IMR-90 (cell line): ENCODE measurements at regions of chr3 and their contacts with region 1.

Region 1: DNA sequence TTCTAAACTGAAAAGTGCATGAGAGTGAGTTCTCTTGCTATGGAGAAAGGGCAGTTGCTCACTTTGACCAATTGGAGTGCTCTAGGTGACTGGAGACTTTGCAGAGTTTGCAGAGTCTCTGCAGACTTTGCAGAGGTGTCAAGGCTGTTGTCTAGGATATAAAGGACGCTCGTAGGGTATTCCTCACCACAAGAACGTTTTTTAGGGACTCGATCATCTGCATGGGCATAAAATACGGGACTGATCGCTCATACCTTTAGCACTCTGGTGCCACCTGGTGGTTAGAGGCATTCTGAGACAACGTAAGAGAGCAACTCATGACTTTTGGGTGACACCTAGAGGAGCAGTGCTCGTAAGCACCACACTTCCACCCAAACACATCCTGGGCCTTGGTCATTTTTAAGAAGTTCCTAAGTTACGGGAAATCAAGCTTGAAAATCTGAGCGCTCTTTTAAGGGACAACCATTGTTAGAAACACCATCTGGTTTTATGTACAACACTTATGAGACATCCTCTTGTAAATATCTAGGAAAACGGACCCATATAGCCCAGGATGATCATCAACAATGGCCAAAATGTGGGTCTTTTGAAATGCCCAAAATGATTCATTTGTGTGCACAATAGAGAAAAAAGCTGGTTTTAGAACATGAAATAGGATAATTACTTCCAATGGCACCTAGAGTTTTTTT is 51.6 kb upstream of the XCR1 start:
- DNase-seq: peak; percentile 93
- ATAC-seq: peak; percentile 97
- H3K4me3 ChIP-seq: no peak overlapping the region
- H3K27ac ChIP-seq: no peak overlapping the region
- H3K4me1 ChIP-seq: no peaks in the 10 kb centered on the region
- H3K27me3 ChIP-seq: peaks cover 9% of the 10 kb centered on the region
- CTCF ChIP-seq: peak; percentile 100
- POLR2A ChIP-seq: peak; percentile 57; the same call in 1 of the 2 replicates
- RAD21 ChIP-seq: peak; percentile 100

Region 2: GRCh38 chr3:45516829-45517228 is 562.0 kb before region 1 on chr3:
- CTCF ChIA-PET with region 1: no interaction called
- POLR2A ChIA-PET with region 1: no interaction called
- dilution Hi-C with region 1: no loop called
- in situ Hi-C with region 1: loop called (anchors 10 kb)
- intact Hi-C with region 1: no loop called
- DNase-seq: peak; percentile 92
- ATAC-seq: peak; percentile 74
- H3K4me3 ChIP-seq: no peak overlapping the region
- H3K27ac ChIP-seq: no peak overlapping the region
- H3K4me1 ChIP-seq: peaks cover 12% of the 10 kb centered on the region
- H3K27me3 ChIP-seq: no peaks in the 10 kb centered on the region
- CTCF ChIP-seq: no peak
- POLR2A ChIP-seq: no peak
- RAD21 ChIP-seq: no peak

Region 3: GRCh38 chr3:45841757-45842491 is 236.9 kb before region 1 on chr3 and contains the start of gene LZTFL1:
- CTCF ChIA-PET with region 1: no interaction called
- POLR2A ChIA-PET with region 1: no interaction called
- dilution Hi-C with region 1: no loop called
- in situ Hi-C with region 1: no loop called
- intact Hi-C with region 1: loop called (anchors 5 kb)
- DNase-seq: peak; percentile 98
- ATAC-seq: peak; percentile 95
- H3K4me3 ChIP-seq: peak within 1 kb of the TSS; percentile 63
- H3K27ac ChIP-seq: peak within 1 kb of the TSS; percentile 16; the same call in 1 of the 2 replicates
- H3K4me1 ChIP-seq: 0 out of 2 replicates have a peak, but pooled peaks cover 2% of the 10 kb centered on the region
- H3K27me3 ChIP-seq: peaks cover 4% of the 10 kb centered on the region
- CTCF ChIP-seq: no peak
- POLR2A ChIP-seq: peak; percentile 58; the same call in 1 of the 2 replicates
- RAD21 ChIP-seq: no peak
- total RNA-seq, gene LZTFL1: 10.4 and 11.4 TPM in 2 replicates

Region 4: DNA sequence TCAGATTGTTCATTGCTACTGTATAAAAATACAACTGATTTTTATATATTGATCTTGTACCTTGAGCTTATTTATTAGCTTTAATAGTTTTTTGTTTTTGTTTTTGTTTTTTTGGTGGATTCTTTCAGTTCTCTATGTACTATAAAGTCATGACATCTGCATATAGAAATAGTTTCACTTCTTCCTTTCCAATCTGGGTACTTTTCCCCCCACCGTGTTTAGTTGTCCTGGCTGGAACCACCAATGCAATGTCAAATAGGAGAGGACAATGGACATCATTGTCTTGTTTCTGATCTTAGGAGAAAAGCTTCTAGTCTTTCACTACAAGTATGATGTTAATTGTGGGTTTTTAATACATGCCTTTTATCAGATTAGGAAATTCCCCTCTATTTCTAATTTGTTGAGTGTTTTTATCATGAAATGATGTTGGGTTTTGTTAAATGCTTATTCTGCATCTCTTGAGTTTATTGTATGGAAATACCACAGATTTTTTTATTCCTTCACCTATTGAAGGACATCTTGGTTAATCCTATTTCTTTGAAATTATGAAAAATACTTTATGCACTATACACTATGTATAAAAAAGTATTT is 48.8 kb before region 1 on chr3:
- CTCF ChIA-PET with region 1: no interaction called
- POLR2A ChIA-PET with region 1: no interaction called
- dilution Hi-C with region 1: no loop called
- in situ Hi-C with region 1: no loop called
- intact Hi-C with region 1: no loop called
- DNase-seq: no peak
- ATAC-seq: no peak
- H3K4me3 ChIP-seq: no peak overlapping the region
- H3K27ac ChIP-seq: no peak overlapping the region
- H3K4me1 ChIP-seq: no peaks in the 10 kb centered on the region
- H3K27me3 ChIP-seq: no peaks in the 10 kb centered on the region; the same call in none of the 2 replicates
- CTCF ChIP-seq: no peak
- POLR2A ChIP-seq: no peak
- RAD21 ChIP-seq: no peak

Region 5: GRCh38 chr3:46378426-46378942 is 299.6 kb after region 1 on chr3:
- CTCF ChIA-PET with region 1: interaction called, 10 read pairs
- POLR2A ChIA-PET with region 1: no interaction called
- dilution Hi-C with region 1: no loop called
- in situ Hi-C with region 1: loop called (anchors 10 kb)
- intact Hi-C with region 1: no loop called
- DNase-seq: peak; percentile 40
- ATAC-seq: peak; percentile 72
- H3K4me3 ChIP-seq: no peak overlapping the region
- H3K27ac ChIP-seq: no peak overlapping the region
- H3K4me1 ChIP-seq: no peaks in the 10 kb centered on the region
- H3K27me3 ChIP-seq: peaks cover 48% of the 10 kb centered on the region
- CTCF ChIP-seq: peak; percentile 66
- POLR2A ChIP-seq: no peak
- RAD21 ChIP-seq: peak; percentile 77